Ovary (tissue), 10 donors: ENCODE measurements at regions of chr1 and their contacts with region 1.

Region 1: GRCh38 chr1:181059435-181059834 is 25.7 kb downstream of the MR1 start:
- DNase-seq: no peak
- H3K4me3 ChIP-seq: no peak overlapping the region
- H3K27ac ChIP-seq: no peak overlapping the region
- H3K4me1 ChIP-seq: no peaks in the 10 kb centered on the region
- H3K27me3 ChIP-seq: no peaks in the 10 kb centered on the region
- CTCF ChIP-seq: no peak
- EP300 ChIP-seq: no peak
- POLR2A ChIP-seq: no peak

Region 2: GRCh38 chr1:180997843-180998504 is 61.5 kb before region 1 on chr1:
- intact Hi-C with region 1: loop called in 1 of 4 experiments (anchors 2 kb)
- DNase-seq: no peak
- H3K4me3 ChIP-seq: no peak overlapping the region
- H3K27ac ChIP-seq: no peak overlapping the region
- H3K4me1 ChIP-seq: peaks cover 10% of the 10 kb centered on the region
- H3K27me3 ChIP-seq: no peaks in the 10 kb centered on the region
- CTCF ChIP-seq: no peak
- EP300 ChIP-seq: no peak
- POLR2A ChIP-seq: no peak

Region 3: DNA sequence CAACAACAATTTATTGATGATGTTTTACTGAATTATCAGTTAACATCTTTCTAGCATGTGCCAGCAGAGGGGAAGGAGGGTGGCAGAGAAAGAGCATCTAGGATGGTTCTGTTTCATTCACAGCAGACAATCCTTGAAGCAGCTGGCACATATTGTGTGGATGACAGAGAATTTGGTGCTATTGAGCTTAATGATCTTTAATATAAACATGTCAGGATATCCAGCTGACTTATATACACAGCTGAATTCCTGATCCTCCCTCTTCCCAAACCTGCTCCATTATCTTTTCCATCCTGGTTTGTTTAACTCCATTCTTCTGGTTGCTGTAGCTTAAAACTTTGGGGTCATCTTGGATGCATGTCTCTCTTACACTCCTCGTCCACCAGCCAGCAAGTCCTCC is 642.5 kb after region 1 on chr1:
- intact Hi-C with region 1: no loop called
- DNase-seq: no peak
- H3K4me3 ChIP-seq: no peak overlapping the region
- H3K27ac ChIP-seq: no peak overlapping the region
- H3K4me1 ChIP-seq: no peaks in the 10 kb centered on the region
- H3K27me3 ChIP-seq: no peaks in the 10 kb centered on the region
- CTCF ChIP-seq: no peak
- EP300 ChIP-seq: no peak
- POLR2A ChIP-seq: no peak